CD14-positive monocyte (primary cell): ENCODE measurements at regions of chr2 and their contacts with region 1.

Region 1: GRCh38 chr2:237662671-237663093 is 35.3 kb downstream of the LRRFIP1 start:
- DNase-seq: peak; percentile 92 to 98 (median 93)
- H3K4me3 ChIP-seq: peak overlapping the region in 1 of 3 experiments; percentile 38
- H3K4me3 Mint-ChIP-seq: peak overlapping the region; percentile 65 to 81
- H3K27ac ChIP-seq: peak overlapping the region; percentile 12 to 24
- H3K27ac Mint-ChIP-seq: peak overlapping the region; percentile 54 to 95 (median 86)
- H3K4me1 ChIP-seq: peaks cover 21 to 28% of the 10 kb centered on the region in 2 donors
- H3K4me1 Mint-ChIP-seq: peaks cover 25% of the 10 kb centered on the region
- H3K27me3 ChIP-seq: no peaks in the 10 kb centered on the region
- H3K27me3 Mint-ChIP-seq: peaks cover 2 to 6% (median 6%) of the 10 kb centered on the region in 3 donors
- CTCF ChIP-seq: no peak

Region 2: DNA sequence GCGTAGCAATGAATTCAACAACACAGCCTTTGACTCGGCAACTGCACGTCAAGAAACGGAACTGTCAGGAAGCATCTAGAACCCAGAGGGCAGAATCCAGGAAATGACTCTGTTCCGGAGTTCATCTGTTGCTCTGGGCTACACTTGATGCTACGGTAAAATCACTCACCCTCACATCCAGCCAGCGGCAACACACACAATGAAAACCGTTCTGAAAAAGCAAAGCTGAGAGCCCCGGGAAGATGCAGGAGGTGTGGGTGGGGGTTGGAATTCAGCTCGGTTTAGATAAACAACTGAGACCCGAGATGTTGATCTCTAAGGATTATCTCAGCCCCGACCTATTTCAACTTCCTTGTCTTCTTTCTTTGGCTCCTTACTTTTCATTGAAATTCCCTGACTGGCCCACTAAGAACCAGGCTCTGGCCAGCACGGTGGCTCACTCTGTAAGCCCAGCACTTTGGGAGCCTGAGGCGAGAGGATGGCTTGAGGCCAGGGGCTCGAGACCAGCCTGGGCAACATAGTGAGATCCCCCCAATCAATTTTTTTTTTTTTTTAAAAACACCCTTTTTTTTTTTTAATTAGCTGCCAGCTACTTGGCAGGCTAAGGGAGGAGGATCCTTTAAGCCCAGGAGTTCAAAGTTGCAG is 58.8 kb before region 1 on chr2:
- intact Hi-C with region 1: loop called in 1 of 2 experiments (anchors 10 kb)
- DNase-seq: peak; percentile 72 to 82 (median 73)
- H3K4me3 ChIP-seq: peak overlapping the region; percentile 2 to 70 (median 7)
- H3K4me3 Mint-ChIP-seq: peak overlapping the region; percentile 74 to 91
- H3K27ac ChIP-seq: peak overlapping the region; percentile 41 to 81
- H3K27ac Mint-ChIP-seq: peak overlapping the region; percentile 78 to 94 (median 93)
- H3K4me1 ChIP-seq: peaks cover 18% of the 10 kb centered on the region in 2 donors
- H3K4me1 Mint-ChIP-seq: peaks cover 29% of the 10 kb centered on the region
- H3K27me3 ChIP-seq: no peaks in the 10 kb centered on the region
- H3K27me3 Mint-ChIP-seq: peaks cover 8 to 17% (median 12%) of the 10 kb centered on the region in 3 donors
- CTCF ChIP-seq: no peak

Region 3: DNA sequence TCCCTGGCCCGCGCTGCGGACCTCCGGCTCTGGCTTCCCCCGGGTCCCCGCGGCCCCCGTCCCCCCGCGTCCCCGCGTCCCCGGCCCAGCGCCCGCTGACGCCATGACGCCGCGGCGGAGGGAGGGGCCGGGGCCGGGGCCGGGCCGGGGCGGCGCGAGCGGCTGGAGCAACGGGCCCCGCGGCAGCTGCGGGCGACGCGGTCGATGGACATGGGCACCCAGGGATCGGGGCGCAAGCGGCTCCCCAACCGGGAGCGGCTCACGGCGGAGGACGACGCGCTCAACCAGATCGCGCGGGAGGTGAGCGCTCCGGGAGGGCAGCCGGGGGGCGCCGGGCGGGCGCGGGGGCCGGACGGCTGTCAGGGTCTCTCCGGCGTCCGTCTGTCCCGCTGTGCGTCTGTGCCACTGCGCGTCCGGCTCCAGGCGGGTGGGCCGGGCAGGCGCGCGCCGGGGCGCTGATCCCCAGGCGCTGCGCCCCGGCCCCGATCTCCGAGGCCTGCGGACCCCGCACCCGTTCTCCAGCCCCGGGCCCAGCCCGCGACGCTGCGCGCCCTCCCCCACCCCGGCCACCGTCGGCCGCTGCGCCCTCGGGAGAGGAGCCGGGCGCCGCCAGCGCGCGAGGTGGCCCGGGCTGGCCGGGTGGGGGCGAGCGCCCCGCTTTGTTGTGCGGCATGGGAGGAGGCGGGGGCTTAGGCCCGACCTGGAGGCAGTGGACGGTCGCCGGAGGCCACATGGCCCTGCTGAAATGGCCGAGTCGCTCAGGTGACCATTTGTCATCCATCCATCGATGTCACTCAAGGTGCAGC is 35.0 kb before region 1 on chr2 and contains the start of gene LRRFIP1:
- intact Hi-C with region 1: loop called (anchors 5 kb)
- DNase-seq: peak in 2 of 3 donors; percentile 32 to 50
- H3K4me3 ChIP-seq: peak within 1 kb of the TSS; percentile 44 to 72 (median 57)
- H3K4me3 Mint-ChIP-seq: peak within 1 kb of the TSS; percentile 88 to 90
- H3K27ac ChIP-seq: no peak within 1 kb of the TSS
- H3K27ac Mint-ChIP-seq: peak within 1 kb of the TSS; percentile 44 to 98 (median 92)
- H3K4me1 ChIP-seq: peaks cover 43 to 48% of the 10 kb centered on the region in 2 donors
- H3K4me1 Mint-ChIP-seq: peaks cover 57% of the 10 kb centered on the region
- H3K27me3 ChIP-seq: peaks cover 9 to 29% of the 10 kb centered on the region in 2 donors
- H3K27me3 Mint-ChIP-seq: peaks cover 24 to 52% (median 41%) of the 10 kb centered on the region in 3 donors
- CTCF ChIP-seq: no peak
- polyA plus RNA-seq, gene LRRFIP1: 67.3 to 148 (median 98.3) TPM

Region 4: DNA sequence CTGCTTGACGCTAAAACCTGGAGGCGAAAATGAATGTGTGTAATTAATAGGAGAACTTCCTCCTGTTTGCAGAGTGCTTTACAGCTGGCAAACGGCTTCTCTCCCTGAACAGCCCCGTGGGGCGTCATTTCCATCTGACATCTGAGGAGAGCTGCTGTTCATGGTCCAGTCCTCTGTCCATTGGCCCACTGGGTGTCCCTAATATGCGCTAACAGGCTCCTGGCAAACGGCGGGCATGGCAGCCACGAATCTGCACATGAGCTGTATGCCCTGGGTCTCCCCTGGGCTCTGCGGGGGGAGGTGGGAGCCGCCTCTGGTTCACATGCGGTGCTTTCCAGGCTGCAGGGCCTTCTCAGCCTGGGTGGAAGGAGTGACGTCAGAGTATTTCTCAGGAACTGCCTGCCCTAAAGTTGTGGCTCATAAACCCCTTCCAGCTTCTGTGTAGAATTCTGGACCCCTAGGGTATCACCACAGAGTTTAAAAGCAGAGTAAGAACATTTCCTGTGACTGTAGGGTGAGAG is 37.9 kb after region 1 on chr2:
- intact Hi-C with region 1: loop called in 1 of 2 experiments (anchors 5 kb)
- DNase-seq: peak; percentile 66 to 90 (median 73)
- H3K4me3 ChIP-seq: peak overlapping the region in 1 of 3 experiments; percentile 59
- H3K4me3 Mint-ChIP-seq: peak overlapping the region in 1 of 2 donors; percentile 49
- H3K27ac ChIP-seq: peak overlapping the region; percentile 77 to 85
- H3K27ac Mint-ChIP-seq: peak overlapping the region; percentile 89 to 99 (median 93)
- H3K4me1 ChIP-seq: peaks cover 98 to 100% of the 10 kb centered on the region in 2 donors
- H3K4me1 Mint-ChIP-seq: peaks cover 99% of the 10 kb centered on the region
- H3K27me3 ChIP-seq: no peaks in the 10 kb centered on the region
- H3K27me3 Mint-ChIP-seq: peaks cover 0 to 2% (median 0%) of the 10 kb centered on the region in 3 donors
- CTCF ChIP-seq: no peak